AG04449 (cell line): ENCODE measurements at regions of chr6 and their contacts with region 1.

Region 1: DNA sequence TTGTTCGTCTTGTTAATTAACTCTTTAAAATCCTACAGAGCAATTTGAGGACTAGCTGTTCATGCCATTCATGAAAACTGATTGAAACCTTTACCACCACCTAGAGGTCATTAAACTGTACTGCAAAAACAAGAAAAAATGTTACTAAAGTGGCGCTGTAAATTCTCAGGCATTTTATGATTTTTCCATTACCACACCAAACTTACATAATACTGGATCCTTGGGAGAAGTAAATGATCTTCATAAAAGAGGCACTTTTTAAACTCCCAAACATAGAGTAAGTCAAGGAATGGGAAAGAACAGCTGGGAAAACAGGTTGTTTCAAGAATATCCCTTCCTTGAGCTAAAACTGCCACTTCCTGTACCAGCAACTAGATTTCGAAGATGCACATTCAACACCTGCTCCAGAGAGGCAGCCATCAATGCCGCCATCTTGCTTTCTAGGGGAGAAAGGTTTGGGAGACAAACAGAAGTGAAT is 54.3 kb downstream of the MYLIP start:
- DNase-seq: peak; percentile 16
- H3K4me3 ChIP-seq: no peak overlapping the region
- CTCF ChIP-seq: peak; percentile 46

Region 2: GRCh38 chr6:15682965-15683822 is 500.0 kb before region 1 on chr6:
- CTCF ChIA-PET with region 1: interaction called, 19 read pairs
- POLR2A ChIA-PET with region 1: no interaction called
- DNase-seq: no peak
- H3K4me3 ChIP-seq: no peak overlapping the region
- CTCF ChIP-seq: no peak

Region 3: GRCh38 chr6:15698471-15698870 is 484.8 kb before region 1 on chr6:
- CTCF ChIA-PET with region 1: interaction called, 113 read pairs
- POLR2A ChIA-PET with region 1: no interaction called
- DNase-seq: no peak
- H3K4me3 ChIP-seq: no peak overlapping the region
- CTCF ChIP-seq: no peak

Region 4: DNA sequence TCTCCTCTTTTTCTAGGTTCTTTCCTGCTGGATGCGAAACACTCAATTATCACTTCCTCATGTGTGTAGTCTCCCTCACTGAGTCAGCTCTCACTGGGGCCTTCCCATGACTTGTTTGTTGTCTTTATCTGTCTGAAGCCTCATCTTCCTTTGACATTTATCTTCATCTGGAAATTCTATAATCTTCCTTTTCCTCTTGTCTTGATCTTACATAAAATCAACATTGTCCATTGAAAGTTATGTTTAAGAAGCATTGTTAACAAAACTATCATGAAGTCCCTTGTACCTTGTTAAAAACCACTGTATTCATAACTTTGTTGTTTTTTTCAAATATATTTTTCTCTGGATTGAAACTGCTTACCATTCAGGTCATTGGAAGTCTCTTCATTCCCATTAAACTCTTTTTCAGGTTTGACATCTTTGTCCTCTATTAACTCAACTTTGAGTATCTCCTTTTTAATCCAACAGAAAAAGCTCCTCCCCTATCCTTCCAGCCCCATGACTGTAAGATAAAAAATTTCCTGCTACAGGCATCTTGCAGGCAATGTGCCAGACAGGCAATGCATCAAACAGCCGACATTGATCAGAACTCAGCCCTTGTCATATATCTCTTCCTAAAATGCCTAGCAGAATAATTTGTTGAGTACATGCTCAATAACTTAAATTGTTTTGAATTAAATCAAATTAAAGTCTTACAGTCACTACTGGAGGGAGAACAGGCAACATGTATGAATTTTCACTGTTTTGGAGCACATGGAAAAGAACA is 19.5 kb before region 1 on chr6:
- CTCF ChIA-PET with region 1: interaction called, 18 read pairs
- POLR2A ChIA-PET with region 1: no interaction called
- DNase-seq: no peak
- H3K4me3 ChIP-seq: no peak overlapping the region
- CTCF ChIP-seq: no peak

Region 5: DNA sequence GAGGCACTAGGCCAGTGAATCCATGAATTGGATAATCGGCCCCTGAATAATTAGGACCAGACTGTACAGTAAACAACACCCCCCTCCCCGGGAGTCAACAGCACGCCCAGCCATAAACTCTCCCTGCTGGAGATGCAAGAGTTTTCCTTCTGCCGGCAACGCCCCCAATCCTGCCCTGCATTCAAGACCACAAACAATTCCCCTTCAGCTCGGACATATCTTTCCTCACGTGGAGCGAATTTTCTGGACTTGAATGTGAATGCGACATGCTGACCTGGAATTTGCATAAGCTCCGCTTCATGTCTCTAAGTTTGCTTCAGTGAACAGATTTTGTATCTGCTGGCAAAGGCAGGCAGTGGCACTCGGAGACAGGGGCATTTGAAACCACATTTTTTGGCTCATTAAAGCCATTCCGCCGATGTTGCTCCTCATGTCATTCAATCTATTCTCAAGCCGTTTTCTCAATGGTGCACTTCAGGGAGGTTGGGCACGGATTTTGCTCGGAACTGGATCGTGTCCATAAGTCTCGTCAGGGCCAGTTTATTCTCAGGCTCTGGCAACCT is 17.2 kb after region 1 on chr6:
- CTCF ChIA-PET with region 1: interaction called, 43 read pairs
- POLR2A ChIA-PET with region 1: no interaction called
- DNase-seq: no peak
- H3K4me3 ChIP-seq: no peak overlapping the region
- CTCF ChIP-seq: no peak